ENCODE measurements at regions of chr1 and their contacts with region 1.

Region 1: DNA sequence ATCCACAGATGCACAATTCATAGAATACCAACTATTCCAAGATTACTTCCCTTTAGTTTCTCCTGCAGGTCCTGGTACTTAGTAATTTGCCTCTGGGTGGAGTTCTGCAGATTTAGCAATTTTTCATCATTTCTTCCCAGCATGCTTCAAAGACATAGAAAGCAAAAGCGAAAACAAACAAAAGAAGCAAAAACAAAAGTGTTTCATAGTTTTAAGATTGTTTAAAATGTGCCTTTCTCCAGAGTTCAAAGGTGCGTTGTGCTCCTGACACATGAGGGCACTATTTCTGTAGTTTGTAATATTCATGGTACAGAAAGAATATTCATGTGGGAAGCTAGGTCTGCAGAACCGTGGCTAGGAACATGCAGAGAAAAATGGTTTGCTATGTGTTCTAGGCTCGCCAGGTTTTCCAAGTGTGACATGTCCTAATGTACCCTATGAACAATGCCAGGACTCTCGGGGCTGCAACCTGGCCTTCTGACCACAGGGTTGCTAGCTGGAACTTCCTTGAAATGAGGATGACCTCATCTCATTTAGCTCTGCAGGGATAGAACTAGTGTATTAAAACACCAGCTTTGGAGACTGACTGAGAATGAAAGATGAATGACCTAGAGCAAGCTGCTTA is 30.0 kb upstream of the RCSD1 start:
- DNase-seq: peak in 1 of 2 donors; percentile 82
- ATAC-seq: peak; percentile 75 to 82 (median 81)
- H3K4me3 ChIP-seq: no peak overlapping the region
- H3K4me3 Mint-ChIP-seq: peak overlapping the region; percentile 38
- H3K27ac ChIP-seq: no peak overlapping the region
- H3K27ac Mint-ChIP-seq: peak overlapping the region in 1 of 2 donors; percentile 50
- H3K4me1 ChIP-seq: peaks cover 34% of the 10 kb centered on the region
- H3K4me1 Mint-ChIP-seq: peaks cover 26 to 30% of the 10 kb centered on the region in 2 donors
- H3K27me3 ChIP-seq: no peaks in the 10 kb centered on the region
- H3K27me3 Mint-ChIP-seq: peaks cover 0 to 5% of the 10 kb centered on the region in 2 donors
- CTCF ChIP-seq: peak; percentile 54

Region 2: DNA sequence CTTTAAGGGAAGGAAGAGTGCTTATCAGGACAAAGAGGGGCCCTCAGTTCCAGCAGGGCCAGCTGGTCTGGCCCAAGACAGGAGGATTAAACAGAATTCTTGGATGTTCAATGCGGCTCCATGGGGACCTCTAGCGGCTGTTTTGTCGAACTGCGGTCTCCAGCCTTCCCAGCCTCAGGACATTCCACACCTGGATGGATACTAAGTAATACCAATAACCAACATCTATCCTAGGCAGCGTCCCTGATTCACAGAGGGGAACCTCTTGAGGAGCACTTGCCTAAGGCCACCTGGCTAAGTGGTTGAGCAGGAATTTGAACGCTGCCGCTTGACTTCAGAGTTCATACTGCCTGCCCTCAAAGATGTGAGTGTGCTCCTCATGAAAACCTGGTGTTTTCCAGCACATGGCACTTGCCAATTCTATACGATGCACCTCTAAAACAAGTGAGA is 66.2 kb before region 1 on chr1:
- intact Hi-C with region 1: no loop called
- DNase-seq: peak; percentile 65 to 84
- ATAC-seq: peak; percentile 87 to 99 (median 96)
- H3K4me3 ChIP-seq: no peak overlapping the region
- H3K4me3 Mint-ChIP-seq: no peak overlapping the region
- H3K27ac ChIP-seq: no peak overlapping the region
- H3K27ac Mint-ChIP-seq: peak overlapping the region in 1 of 2 donors; percentile 22
- H3K4me1 ChIP-seq: peaks cover 6% of the 10 kb centered on the region
- H3K4me1 Mint-ChIP-seq: no peaks in the 10 kb centered on the region
- H3K27me3 ChIP-seq: no peaks in the 10 kb centered on the region
- H3K27me3 Mint-ChIP-seq: no peaks in the 10 kb centered on the region
- CTCF ChIP-seq: peak; percentile 91

Region 3: GRCh38 chr1:167627865-167628641 is 28.0 kb after region 1 on chr1:
- intact Hi-C with region 1: loop called (anchors 2 kb)
- DNase-seq: peak; percentile 53 to 90
- ATAC-seq: peak; percentile 57 to 77 (median 65)
- H3K4me3 ChIP-seq: peak overlapping the region; percentile 11
- H3K4me3 Mint-ChIP-seq: peak overlapping the region; percentile 88
- H3K27ac ChIP-seq: peak overlapping the region; percentile 89
- H3K27ac Mint-ChIP-seq: peak overlapping the region; percentile 89 to 93
- H3K4me1 ChIP-seq: peaks cover 52% of the 10 kb centered on the region
- H3K4me1 Mint-ChIP-seq: peaks cover 57 to 62% of the 10 kb centered on the region in 2 donors
- H3K27me3 ChIP-seq: no peaks in the 10 kb centered on the region
- H3K27me3 Mint-ChIP-seq: no peaks in the 10 kb centered on the region
- CTCF ChIP-seq: no peak

Region 4: DNA sequence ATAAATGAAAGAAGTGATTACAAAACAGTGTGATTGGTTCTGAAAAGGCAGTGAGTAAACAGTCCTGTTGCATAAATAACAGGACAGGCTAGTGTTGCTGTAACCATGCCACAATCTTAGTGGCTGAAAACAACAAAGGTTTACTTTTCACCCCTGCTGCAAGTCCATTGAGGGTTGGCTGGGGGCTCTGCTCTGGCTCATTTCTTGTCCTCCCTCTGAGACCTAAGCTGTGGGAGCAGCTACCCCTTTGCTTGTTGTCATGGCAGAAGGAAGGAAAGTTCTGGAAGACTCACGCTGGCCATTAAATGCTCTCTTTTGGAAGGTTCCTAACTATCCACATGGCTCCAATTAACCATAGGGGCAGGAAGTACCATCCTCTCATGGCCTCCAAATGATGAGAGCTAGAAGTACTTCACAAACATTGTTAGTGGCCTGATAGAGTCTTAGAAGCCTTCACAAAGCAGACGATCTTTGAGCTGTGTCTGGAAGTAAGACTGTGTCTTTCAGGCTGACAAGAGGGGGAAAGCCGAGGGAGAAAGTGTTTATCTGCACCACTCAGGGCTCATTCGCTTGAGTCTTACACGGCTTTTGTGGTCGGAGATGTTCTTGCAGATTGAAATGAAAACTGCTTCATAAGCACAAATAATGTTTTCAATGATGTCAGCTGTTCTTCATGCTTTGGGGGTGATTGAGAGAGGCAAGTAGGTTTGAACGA is 41.9 kb after region 1 on chr1:
- intact Hi-C with region 1: loop called (anchors 5 kb)
- DNase-seq: peak in 1 of 2 donors; percentile 54
- ATAC-seq: peak in 2 of 3 donors; percentile 21 to 49
- H3K4me3 ChIP-seq: no peak overlapping the region
- H3K4me3 Mint-ChIP-seq: peak overlapping the region; percentile 57
- H3K27ac ChIP-seq: peak overlapping the region; percentile 26
- H3K27ac Mint-ChIP-seq: peak overlapping the region; percentile 89 to 93
- H3K4me1 ChIP-seq: peaks cover 88% of the 10 kb centered on the region
- H3K4me1 Mint-ChIP-seq: peaks cover 75 to 83% of the 10 kb centered on the region in 2 donors
- H3K27me3 ChIP-seq: no peaks in the 10 kb centered on the region
- H3K27me3 Mint-ChIP-seq: no peaks in the 10 kb centered on the region
- CTCF ChIP-seq: no peak

Region 5: DNA sequence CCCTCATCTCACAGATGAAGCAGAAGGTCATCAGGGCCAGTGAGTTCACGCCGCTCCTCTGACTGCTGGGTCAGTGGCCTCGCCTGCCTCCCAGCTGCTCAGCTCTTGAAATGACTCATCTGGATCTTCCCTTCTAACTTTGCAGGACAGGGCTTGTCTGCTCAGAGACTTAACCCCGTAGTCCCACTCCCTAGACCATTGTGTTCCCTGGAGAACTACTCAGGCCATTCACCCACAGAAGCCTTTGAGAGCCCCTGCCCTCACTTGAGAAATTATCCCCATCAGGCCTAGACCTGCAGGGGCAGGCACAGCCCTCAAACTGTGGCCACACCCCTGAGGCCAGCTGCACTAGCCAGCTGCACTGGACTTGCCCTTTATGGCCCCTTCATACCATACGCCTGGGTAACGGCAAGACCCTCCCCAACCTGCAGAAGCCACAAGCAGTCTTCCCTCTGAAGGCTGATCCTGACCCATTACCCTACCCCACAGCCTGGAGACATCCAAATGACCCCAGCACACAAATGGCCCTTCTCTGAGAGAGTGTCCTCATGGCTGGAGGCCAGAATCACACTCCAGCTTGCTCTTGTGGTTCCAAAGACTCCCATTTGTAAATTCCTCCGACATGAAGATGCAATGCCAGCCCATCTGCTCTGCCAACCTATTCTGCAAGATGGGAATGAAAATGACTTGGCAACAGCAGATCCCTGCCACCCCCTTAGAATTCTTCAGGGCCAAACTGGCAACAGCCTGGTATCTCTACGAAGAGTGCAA is 63.1 kb after region 1 on chr1:
- intact Hi-C with region 1: loop called (anchors 5 kb)
- DNase-seq: no peak
- ATAC-seq: no peak
- H3K4me3 ChIP-seq: no peak overlapping the region
- H3K4me3 Mint-ChIP-seq: no peak overlapping the region
- H3K27ac ChIP-seq: no peak overlapping the region
- H3K27ac Mint-ChIP-seq: peak overlapping the region; percentile 47 to 97
- H3K4me1 ChIP-seq: peaks cover 65% of the 10 kb centered on the region
- H3K4me1 Mint-ChIP-seq: peaks cover 92 to 94% of the 10 kb centered on the region in 2 donors
- H3K27me3 ChIP-seq: no peaks in the 10 kb centered on the region
- H3K27me3 Mint-ChIP-seq: no peaks in the 10 kb centered on the region
- CTCF ChIP-seq: no peak

Region 6: DNA sequence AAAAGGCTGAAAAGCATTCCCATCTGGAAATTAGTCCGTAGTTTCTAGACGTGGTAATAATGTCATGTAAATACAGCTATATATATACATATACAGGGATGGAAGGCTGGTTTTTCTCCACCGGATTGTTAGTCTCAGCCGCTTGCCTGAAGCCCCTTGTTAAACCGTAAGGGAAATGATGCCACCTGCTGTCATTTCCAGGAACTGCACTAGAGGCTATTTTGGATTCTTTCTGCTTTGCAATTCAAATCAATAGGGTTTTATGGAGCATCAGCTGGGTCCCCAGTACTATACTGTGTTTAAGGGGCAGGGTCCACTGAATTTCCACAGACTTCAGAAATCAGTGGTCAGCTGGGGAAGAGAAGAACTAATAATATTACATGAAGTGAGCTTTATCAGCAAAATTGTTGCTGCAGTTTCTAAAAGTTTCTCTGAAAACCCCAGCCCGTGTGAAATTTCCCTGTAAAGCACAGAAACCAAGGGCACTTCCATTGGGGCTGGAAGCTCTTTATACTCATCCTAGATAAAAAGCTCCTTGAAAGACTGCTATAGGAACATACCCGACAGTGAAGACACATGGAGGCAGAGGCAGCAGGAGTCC is 88.0 kb after region 1 on chr1:
- intact Hi-C with region 1: loop called (anchors 1 kb)
- DNase-seq: peak; percentile 63 to 89
- ATAC-seq: peak; percentile 77 to 96 (median 83)
- H3K4me3 ChIP-seq: no peak overlapping the region
- H3K4me3 Mint-ChIP-seq: no peak overlapping the region
- H3K27ac ChIP-seq: no peak overlapping the region
- H3K27ac Mint-ChIP-seq: peak overlapping the region in 1 of 2 donors; percentile 67
- H3K4me1 ChIP-seq: peaks cover 9% of the 10 kb centered on the region
- H3K4me1 Mint-ChIP-seq: peaks cover 23 to 31% of the 10 kb centered on the region in 2 donors
- H3K27me3 ChIP-seq: no peaks in the 10 kb centered on the region
- H3K27me3 Mint-ChIP-seq: no peaks in the 10 kb centered on the region
- CTCF ChIP-seq: peak; percentile 91